A549 (cell line): ENCODE measurements at regions of chr1 and their contacts with region 1.

Region 1: GRCh38 chr1:3491291-3492246 is 37.1 kb downstream of the ARHGEF16 start:
- DNase-seq: peak; percentile 39 to 52
- ATAC-seq: peak; percentile 81 to 91
- H3K4me3 ChIP-seq: no peak overlapping the region
- H3K27ac ChIP-seq: 0 out of 6 replicates have a peak overlapping the region, but pooled peaks of 1 of the 2 experiments have one; percentile 9
- H3K4me1 ChIP-seq: peaks cover 3% of the 10 kb centered on the region; the same call in 1 of the 3 replicates
- CTCF ChIP-seq: peak; percentile 76
- EP300 ChIP-seq: no peak
- POLR2A ChIP-seq: no peak
- RAD21 ChIP-seq: peak; percentile 71 to 84

Region 2: DNA sequence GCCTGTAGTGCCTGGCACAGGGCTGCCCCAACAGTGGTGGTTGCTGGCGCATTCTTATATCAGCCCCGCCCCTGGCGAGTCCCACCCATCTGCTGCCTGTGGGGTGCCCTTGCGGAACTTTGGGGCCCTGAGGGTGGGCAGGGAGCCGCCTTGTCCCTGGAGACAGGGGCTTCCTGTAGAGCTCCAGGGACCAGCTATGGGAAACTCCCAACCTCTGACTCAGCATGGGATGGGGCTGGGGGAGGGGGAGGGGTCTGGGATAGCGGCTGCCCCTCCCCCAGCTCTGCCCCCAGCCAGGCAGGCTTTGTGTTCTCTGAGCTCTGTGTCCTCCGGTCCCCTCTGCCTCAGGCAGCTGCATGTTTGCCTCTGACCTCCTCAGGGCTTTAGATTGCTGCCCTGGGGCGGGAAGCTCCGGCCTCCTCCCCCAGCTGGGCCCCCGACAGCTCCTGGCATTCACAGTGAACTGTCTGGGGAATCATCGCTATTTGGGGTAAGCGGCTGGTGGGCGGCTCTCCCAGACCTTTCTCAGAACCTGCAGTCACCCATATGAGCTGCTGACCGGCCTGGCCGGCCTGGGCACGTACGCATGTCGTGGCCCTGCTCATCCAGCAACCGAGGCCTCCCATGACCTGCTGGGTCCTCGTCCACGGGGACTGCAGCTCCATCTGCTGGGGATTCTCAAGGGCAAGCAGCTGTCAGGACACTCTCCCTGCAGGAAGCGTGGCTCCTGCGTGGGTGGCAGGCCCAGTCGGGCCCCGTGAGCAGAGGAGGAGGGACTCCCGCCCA is 20.1 kb before region 1 on chr1:
- CTCF ChIA-PET with region 1: interaction called, 11 read pairs
- POLR2A ChIA-PET with region 1: no interaction called
- DNase-seq: peak; percentile 28 to 52
- ATAC-seq: peak; percentile 62 to 78; a peak in 5 of 6 replicates
- H3K4me3 ChIP-seq: no peak overlapping the region
- H3K27ac ChIP-seq: peak overlapping the region; percentile 60 to 85; a peak in 5 of 6 replicates
- H3K4me1 ChIP-seq: peaks cover 12% of the 10 kb centered on the region
- CTCF ChIP-seq: peak; percentile 33
- EP300 ChIP-seq: no peak
- POLR2A ChIP-seq: no peak
- RAD21 ChIP-seq: peak in 1 of 2 experiments; percentile 35; a peak in 2 of 5 replicates

Region 3: DNA sequence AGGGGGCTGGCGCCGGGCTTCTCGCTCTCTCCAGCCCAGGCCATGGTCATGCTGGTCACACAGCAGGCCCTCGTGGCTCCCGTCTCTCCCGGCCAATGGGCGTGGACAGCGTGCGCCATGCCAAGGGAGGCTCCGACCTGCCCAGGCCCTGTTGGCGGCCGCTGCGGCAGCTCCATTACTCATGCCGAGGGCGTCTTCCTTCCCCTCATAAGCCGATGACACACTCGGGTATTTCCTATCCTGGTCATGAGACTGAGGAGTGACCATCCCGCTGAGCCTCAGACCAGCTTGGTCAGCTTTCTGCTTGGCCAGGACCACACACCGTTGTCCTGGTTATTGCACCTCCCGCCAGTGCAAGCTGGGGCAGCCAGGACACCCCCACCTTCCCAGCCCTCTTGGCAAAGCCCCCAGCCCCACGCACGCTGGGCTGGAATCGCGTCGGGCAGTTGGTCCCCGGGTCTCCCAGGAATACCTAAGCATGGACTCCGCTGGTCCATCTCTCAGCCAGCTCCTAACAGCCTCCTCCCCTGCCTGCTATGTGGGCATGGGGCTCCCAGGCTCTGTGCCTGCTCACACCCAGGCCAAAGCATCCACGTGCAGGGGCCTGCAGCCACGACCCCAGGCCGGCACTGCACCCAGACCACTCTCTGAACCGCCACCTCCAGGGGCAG is 12.7 kb after region 1 on chr1:
- CTCF ChIA-PET with region 1: interaction called, 13 read pairs
- POLR2A ChIA-PET with region 1: no interaction called
- DNase-seq: peak; percentile 65 to 74
- ATAC-seq: peak; percentile 75 to 88
- H3K4me3 ChIP-seq: no peak overlapping the region
- H3K27ac ChIP-seq: peak overlapping the region; percentile 76 to 93
- H3K4me1 ChIP-seq: peaks cover 21% of the 10 kb centered on the region
- CTCF ChIP-seq: no peak
- EP300 ChIP-seq: peak in 1 of 2 experiments; percentile 27; a peak in 1 of 5 replicates
- POLR2A ChIP-seq: no peak
- RAD21 ChIP-seq: no peak

Region 4: DNA sequence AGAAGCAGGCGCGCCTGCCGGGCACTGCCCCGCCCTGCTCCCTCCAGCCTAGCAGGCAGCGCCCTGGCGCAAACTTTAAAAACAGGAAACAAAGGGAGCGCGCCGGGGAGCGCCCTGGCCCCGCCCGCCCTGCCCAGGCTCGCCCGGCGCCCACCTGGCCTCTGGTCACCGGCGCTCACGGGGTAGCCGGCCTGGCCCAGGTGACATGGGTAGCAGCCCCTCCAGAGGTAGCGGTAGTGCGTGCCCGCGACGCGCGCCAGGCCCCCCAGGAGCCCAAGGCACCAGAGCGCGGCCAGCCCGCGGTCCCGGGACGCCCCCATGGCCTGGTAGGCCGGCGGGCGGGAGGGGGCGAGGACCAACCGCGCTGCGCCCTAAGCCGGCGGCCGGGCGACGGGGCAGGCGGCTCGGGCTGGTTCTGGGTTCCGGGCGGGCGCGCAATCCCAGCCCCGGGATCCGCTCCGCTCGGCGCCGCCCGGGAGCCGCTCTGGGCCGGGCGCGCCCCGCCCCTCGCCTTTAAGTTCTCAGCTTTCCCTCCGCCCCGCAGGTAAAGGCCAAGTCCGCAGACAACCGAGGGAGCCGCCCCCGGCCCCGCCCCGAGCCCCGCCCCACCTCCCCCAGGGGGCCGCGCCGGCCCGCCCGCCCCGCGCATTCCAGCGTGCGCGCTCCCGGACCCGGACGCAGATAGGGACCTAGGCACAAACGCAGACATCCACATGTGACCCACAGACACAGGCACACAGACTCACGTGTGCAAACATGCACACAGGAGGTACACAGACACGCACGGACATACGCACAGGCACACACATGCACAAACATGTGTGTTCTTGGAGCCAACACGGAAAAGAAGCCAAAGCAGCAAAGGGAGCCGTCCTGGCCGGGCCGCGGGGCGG is 39.6 kb after region 1 on chr1:
- CTCF ChIA-PET with region 1: interaction called, 10 read pairs
- POLR2A ChIA-PET with region 1: no interaction called
- DNase-seq: peak; percentile 67 to 74
- ATAC-seq: peak; percentile 74
- H3K4me3 ChIP-seq: peak overlapping the region; percentile 89
- H3K27ac ChIP-seq: peak overlapping the region; percentile 79 to 95
- H3K4me1 ChIP-seq: peaks cover 12% of the 10 kb centered on the region; the same call in 1 of the 3 replicates
- CTCF ChIP-seq: no peak
- EP300 ChIP-seq: no peak
- POLR2A ChIP-seq: peak; percentile 48
- RAD21 ChIP-seq: no peak

Region 5: DNA sequence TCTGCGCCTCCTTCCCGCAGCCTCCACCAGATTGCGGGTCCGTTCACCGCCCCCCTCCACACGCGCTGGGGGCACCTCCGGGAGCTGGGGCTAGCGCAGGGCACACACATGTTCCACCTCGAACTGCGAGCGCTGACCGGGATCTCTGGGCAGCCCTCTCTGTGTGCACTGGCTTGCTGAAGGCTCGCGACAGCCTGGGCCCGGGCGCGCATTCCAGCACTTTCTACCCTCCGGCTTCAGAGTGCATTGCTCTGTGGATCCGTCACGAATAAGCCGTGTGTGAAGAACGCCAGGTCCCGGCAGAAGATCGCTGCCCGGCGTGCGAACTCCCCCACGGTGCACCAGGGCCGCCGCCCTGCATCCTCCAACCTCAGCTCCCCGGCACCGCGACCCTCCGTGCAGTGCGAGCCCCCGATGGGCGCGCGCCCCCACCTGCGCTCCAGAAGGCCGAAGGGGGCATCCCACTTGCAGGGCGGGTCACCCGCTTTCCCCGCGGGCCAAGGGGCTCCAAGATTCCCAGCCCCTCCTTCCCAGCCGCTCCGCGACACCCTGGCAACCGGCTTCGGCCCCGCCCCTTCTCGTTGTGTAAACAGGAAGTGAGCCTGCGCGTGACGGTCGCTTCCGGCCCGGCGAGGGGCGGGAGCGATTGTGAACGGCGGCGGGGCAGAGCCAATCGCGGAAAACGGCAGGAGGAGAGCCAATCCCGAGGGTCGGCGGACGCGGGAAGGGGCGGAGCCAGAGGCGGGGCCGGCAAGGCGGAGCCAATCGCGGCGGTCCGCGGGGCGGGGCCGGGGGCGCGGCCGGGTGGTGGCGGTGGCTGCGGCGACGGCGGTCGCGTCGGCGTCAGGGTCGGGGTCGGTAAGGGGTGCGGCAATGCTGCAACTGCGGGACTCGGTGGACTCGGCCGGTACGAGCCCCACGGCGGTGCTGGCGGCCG is 132.9 kb after region 1 on chr1 and contains the start of gene TPRG1L:
- CTCF ChIA-PET with region 1: interaction called, 58 read pairs
- POLR2A ChIA-PET with region 1: no interaction called
- DNase-seq: peak; percentile 90 to 93
- ATAC-seq: peak; percentile 87 to 94
- H3K4me3 ChIP-seq: peak within 1 kb of the TSS; percentile 92
- H3K27ac ChIP-seq: peak within 1 kb of the TSS; percentile 86 to 96
- H3K4me1 ChIP-seq: peaks cover 6% of the 10 kb centered on the region; the same call in 1 of the 3 replicates
- CTCF ChIP-seq: no peak
- EP300 ChIP-seq: no peak
- POLR2A ChIP-seq: peak; percentile 63
- RAD21 ChIP-seq: no peak
- polyA plus RNA-seq, gene TPRG1L: 13.1 and 15.8 TPM in 2 replicates

Region 6: GRCh38 chr1:3631330-3632262 is 140.0 kb after region 1 on chr1:
- CTCF ChIA-PET with region 1: interaction called, 13 read pairs
- POLR2A ChIA-PET with region 1: no interaction called
- DNase-seq: no peak
- ATAC-seq: no peak; a peak in 1 of 6 replicates
- H3K4me3 ChIP-seq: no peak overlapping the region
- H3K27ac ChIP-seq: no peak overlapping the region
- H3K4me1 ChIP-seq: no peaks in the 10 kb centered on the region
- CTCF ChIP-seq: no peak
- EP300 ChIP-seq: no peak
- POLR2A ChIP-seq: no peak
- RAD21 ChIP-seq: no peak